ENCODE measurements at regions of chr14 and their contacts with region 1.

Region 1: DNA sequence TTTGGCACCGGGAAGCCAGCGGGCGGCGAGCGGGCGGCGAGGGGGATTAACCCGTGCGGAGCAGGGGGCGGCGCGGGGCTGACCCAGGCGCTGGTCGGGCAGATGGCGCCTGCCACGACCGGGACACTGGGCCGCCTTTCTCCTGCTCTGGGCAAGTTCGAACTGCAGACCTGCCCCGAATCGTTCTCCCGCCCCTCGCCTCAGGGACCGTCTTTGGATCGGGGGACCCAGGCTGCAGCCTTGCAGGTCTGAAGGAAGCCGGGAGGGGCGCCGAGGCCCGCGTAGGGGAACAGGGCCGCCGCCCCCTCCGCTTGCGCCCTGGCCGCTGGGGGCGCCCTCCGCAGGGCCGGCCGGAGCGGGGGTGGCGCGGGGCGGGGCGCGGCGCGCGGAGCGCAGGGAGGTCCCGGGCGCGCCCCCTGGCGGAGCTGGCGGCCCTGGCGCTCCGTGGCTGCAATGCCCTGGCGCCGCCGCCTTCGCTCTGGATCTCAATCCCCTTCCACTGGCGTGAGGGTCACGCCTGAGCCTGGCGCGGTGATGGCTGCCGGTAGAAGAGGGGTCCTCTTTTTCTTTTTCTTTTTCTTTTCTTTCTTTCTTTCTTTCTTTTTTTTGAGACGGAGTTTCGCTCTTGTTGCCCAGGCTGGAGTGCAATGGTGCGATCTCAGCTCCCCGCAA is 449 bp upstream of the LTBP2 start:
- DNase-seq: peak; percentile 91
- ATAC-seq: peak; percentile 89

Region 2: DNA sequence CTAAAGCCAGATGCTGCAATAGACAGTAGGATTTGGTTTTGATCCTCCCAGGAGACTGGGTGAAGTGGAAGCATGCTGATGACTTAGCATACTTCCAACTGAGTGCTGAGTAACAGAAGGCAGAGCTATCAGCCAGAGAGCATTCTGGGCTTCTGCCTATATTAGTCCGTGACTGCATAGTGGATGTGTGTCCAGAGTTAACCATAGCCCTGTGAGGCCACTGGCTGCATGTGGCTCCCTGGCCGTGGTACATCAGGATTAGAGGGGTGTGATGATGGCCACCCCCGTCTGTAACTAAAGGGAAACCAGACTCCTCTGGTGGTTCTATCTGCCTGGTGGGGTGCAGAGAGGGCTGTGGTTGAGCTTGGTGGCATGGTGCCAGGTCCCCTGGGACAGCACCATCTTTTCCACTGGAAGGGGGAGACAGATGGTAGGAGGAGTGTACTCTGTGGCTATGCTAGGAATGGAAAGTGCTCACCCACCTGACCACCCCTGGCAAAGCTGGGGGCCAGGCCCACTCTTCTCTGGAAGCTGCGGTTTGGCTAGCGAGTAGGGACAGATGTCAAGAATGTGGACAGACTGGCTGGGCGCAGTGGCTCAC is 337.1 kb before region 1 on chr14:
- intact Hi-C with region 1: no loop called
- DNase-seq: no peak
- ATAC-seq: peak; percentile 81

Region 3: DNA sequence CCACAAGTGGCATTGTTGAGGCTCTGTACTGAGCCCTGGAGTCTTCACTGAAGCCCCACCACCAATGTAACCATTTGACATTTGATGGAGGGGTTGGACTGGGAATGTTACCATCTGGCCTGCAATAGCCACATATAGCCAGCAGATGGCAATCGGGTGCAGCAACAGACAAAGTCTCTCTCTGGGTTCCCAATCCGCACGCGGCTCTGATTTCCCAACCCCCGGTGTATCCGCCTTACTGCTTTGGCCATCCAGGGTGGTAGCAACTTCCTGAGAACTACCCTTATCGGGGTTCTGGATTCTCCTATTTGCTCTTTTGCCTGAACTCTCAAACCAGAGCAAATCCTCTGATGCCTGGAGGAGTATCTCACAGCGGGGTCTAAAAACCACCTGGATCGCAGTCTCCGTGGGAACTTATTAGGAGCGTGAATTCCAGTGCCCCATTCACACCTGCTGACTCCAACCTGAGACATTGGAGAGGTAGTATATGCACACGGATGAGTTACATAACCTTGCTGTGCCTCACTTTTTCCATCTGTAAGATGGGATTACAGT is 250.0 kb before region 1 on chr14:
- intact Hi-C with region 1: loop called (anchors 10 kb)
- DNase-seq: peak; percentile 85
- ATAC-seq: peak; percentile 93

Region 4: GRCh38 chr14:74478996-74479635 is 133.4 kb before region 1 on chr14:
- intact Hi-C with region 1: no loop called
- DNase-seq: no peak
- ATAC-seq: no peak

Region 5: GRCh38 chr14:74501135-74501614 is 111.3 kb before region 1 on chr14:
- intact Hi-C with region 1: loop called (anchors 10 kb)
- DNase-seq: peak; percentile 81
- ATAC-seq: peak; percentile 67

Region 6: GRCh38 chr14:74697543-74697942 is 85.1 kb after region 1 on chr14:
- intact Hi-C with region 1: no loop called
- DNase-seq: no peak
- ATAC-seq: no peak

Region 7: DNA sequence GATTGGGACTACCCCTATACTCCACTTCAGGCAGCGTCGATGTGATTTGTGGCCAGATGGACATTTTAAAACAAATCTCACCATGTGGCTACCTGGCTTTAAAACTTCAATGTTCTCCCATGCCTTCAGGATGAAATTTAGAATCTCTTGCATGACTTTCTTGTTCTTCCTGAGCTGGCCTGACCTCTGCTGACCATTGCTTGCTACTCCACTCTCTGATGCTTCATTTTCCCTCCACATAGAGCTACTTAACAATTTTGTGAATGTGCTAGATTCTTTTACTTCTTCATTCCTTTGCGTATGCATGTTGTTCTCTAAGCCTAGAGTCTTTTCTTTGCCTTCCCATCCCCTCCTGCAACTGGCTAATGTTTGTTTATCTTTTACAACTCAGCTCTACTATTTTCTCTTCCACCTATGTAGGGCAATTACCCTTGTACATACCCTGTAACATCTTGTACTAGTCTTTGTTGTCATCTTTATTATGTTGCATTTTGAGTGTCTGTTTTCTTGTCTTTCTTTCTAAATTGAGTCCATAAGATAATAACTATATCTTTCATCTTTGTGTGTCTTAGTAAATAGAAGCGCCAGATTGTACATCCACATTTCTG is 191.8 kb after region 1 on chr14:
- intact Hi-C with region 1: loop called (anchors 5 kb)
- DNase-seq: no peak
- ATAC-seq: peak; percentile 52

Measured in Right ventricle myocardium superior (tissue), 1 donor.